Cardiac septum (tissue), 1 donor: ENCODE measurements at regions of chr13 and their contacts with region 1.

Region 1: DNA sequence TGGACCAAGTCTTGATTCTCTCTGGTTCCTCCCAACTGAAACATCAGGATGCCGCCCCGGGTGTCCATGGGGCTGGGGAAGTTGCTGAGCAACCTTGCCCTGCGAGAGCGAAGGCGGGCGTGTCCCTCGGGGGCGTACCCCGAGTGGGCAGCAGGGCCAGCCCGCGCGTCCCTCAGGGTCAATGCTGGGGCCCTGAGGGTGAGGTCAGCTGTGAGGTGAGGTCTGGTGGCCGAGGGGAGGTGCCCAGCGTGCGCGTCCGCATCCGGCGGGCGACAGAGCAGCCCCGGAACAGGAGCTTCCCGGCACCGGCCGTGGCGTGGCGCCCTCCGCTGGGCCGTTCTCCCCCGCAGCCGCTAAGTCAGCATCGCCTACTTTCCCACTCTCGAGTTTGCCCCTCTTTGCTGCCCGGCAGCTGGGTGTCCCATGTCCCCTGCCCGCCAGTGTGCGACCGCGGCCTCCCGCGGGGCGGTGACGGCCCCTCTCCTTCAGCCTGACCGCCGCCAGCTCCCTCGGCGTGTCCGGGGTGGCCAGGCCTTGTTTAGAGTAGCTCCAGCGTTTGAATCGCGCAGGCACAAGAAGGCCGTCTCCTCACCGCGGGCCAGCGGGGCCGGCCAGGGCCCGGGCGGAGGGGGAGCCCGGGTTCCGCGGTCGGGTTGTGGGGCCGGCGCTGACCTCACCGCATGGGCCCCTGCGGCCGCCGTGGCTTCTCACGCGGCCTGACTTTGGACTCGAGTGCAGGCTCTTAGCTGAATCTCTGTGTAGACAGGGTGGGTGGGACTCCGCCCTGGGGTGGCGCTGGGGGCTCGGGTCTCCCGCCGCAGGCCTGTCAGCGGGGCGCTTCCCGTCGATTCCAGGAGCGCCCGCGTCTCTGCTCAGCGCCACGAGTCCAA is 33.0 kb downstream of the GJA3 start:
- DNase-seq: peak; percentile 82

Region 2: GRCh38 chr13:20141238-20142022 is 13.6 kb after region 1 on chr13:
- intact Hi-C with region 1: loop called (anchors 1 kb)
- DNase-seq: no peak